Endothelial cell of umbilical vein (primary cell): ENCODE measurements at regions of chr10 and their contacts with region 1.

Region 1: GRCh38 chr10:69800109-69800508 is 1.6 kb upstream of the COL13A1 start:
- DNase-seq: peak; percentile 56
- H3K4me3 ChIP-seq: no peak overlapping the region
- H3K27ac ChIP-seq: no peak overlapping the region
- H3K4me1 ChIP-seq: peaks cover 20% of the 10 kb centered on the region
- H3K27me3 ChIP-seq: peaks cover 13 to 23% of the 10 kb centered on the region in 2 experiments
- CTCF ChIP-seq: peak; percentile 77 to 79
- POLR2A ChIP-seq: no peak

Region 2: GRCh38 chr10:68813559-68813958 is 986.5 kb before region 1 on chr10:
- CTCF ChIA-PET with region 1: no interaction called
- POLR2A ChIA-PET with region 1: no interaction called
- dilution Hi-C with region 1: no loop called
- intact Hi-C with region 1: no loop called
- DNase-seq: no peak
- H3K4me3 ChIP-seq: no peak overlapping the region
- H3K27ac ChIP-seq: no peak overlapping the region
- H3K4me1 ChIP-seq: no peaks in the 10 kb centered on the region
- H3K27me3 ChIP-seq: no peaks in the 10 kb centered on the region
- CTCF ChIP-seq: no peak
- POLR2A ChIP-seq: no peak

Region 3: GRCh38 chr10:69644658-69645295 is 155.3 kb before region 1 on chr10:
- CTCF ChIA-PET with region 1: interaction called, 25 read pairs
- POLR2A ChIA-PET with region 1: no interaction called
- dilution Hi-C with region 1: no loop called
- intact Hi-C with region 1: loop called (anchors 1 kb)
- DNase-seq: peak; percentile 49
- H3K4me3 ChIP-seq: no peak overlapping the region
- H3K27ac ChIP-seq: no peak overlapping the region
- H3K4me1 ChIP-seq: no peaks in the 10 kb centered on the region
- H3K27me3 ChIP-seq: peaks cover 2 to 3% of the 10 kb centered on the region in 2 experiments
- CTCF ChIP-seq: peak; percentile 84 to 86
- POLR2A ChIP-seq: no peak

Region 4: GRCh38 chr10:69728335-69728870 is 71.7 kb before region 1 on chr10:
- CTCF ChIA-PET with region 1: interaction called, 10 read pairs
- POLR2A ChIA-PET with region 1: no interaction called
- dilution Hi-C with region 1: no loop called
- intact Hi-C with region 1: no loop called
- DNase-seq: peak; percentile 87
- H3K4me3 ChIP-seq: no peak overlapping the region
- H3K27ac ChIP-seq: peak overlapping the region; percentile 64
- H3K4me1 ChIP-seq: peaks cover 21% of the 10 kb centered on the region
- H3K27me3 ChIP-seq: peaks cover 0 to 2% of the 10 kb centered on the region in 2 experiments
- CTCF ChIP-seq: no peak
- POLR2A ChIP-seq: no peak

Region 5: DNA sequence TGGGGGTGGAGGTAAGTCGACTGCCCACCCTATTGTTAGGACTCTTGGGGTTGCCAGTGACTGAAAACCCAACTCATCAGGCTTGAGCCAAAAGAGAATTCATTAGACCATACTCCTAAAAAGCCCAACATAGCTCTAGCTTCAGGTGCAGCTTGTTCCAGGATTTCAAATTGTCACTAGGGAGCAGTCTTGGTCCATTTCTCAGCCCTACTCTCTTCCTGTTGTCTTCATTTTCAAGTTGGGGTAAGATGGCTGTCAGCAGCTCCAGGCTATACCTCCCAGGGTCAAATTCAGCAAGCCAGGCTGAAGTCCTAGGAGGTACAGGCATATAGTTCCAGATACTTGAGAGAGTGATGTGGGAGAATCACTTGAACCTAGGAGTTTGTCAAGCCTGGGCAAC is 13.3 kb before region 1 on chr10:
- CTCF ChIA-PET with region 1: interaction called, 79 read pairs
- POLR2A ChIA-PET with region 1: no interaction called
- dilution Hi-C with region 1: no loop called
- intact Hi-C with region 1: no loop called
- DNase-seq: peak; percentile 66
- H3K4me3 ChIP-seq: no peak overlapping the region
- H3K27ac ChIP-seq: no peak overlapping the region
- H3K4me1 ChIP-seq: no peaks in the 10 kb centered on the region
- H3K27me3 ChIP-seq: peaks cover 24 to 25% of the 10 kb centered on the region in 2 experiments
- CTCF ChIP-seq: peak; percentile 49 to 50
- POLR2A ChIP-seq: no peak

Region 6: DNA sequence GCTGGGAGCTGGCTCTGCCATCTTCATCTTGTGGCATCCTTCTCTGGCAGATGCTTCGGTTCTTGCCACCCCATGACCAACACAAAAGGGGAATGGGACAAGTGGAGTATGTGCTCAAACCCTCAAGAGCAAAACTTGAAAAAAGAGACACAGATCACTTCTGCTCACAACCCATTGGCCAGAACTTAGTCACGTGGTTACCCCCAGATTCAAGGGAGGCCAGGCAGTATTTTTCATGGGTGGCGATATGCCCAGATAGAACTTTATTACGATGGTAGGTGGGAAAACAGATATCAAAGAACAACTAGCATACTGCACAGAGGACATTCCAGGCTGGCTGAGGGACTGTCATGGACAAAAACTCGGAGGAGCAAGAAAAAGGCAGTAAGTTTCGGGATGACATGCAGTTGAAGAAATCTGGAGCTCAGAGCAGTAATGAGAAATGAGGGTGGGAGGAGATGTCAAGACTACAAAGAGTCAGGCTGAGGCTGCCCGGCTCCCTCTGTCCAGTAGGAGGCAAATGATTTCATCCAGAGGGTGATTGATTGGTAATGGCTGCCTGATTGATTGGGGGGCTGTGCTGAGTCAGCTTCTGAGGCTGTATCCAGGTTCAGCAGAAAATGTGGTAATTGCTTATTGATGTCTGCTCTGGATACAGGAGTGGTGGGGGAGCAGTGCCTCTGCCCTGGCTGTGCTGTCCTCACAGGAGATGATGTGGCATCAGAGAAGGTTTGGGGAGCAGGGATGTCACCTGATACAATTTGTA is 26.9 kb after region 1 on chr10:
- CTCF ChIA-PET with region 1: interaction called, 5 read pairs
- POLR2A ChIA-PET with region 1: no interaction called
- dilution Hi-C with region 1: no loop called
- intact Hi-C with region 1: loop called (anchors 1 kb)
- DNase-seq: no peak
- H3K4me3 ChIP-seq: no peak overlapping the region
- H3K27ac ChIP-seq: no peak overlapping the region
- H3K4me1 ChIP-seq: peaks cover 37% of the 10 kb centered on the region
- H3K27me3 ChIP-seq: no peaks in the 10 kb centered on the region
- CTCF ChIP-seq: peak; percentile 6 to 13
- POLR2A ChIP-seq: no peak

Region 7: GRCh38 chr10:69845574-69846292 is 45.6 kb after region 1 on chr10:
- CTCF ChIA-PET with region 1: interaction called, 12 read pairs
- POLR2A ChIA-PET with region 1: interaction called, 4 read pairs
- dilution Hi-C with region 1: no loop called
- intact Hi-C with region 1: loop called (anchors 5 kb)
- DNase-seq: peak; percentile 81
- H3K4me3 ChIP-seq: peak overlapping the region in 1 of 3 experiments; percentile 6
- H3K27ac ChIP-seq: peak overlapping the region; percentile 78
- H3K4me1 ChIP-seq: peaks cover 43% of the 10 kb centered on the region
- H3K27me3 ChIP-seq: no peaks in the 10 kb centered on the region
- CTCF ChIP-seq: no peak
- POLR2A ChIP-seq: no peak

Region 8: GRCh38 chr10:69861251-69862240 is 61.4 kb after region 1 on chr10:
- CTCF ChIA-PET with region 1: interaction called, 15 read pairs
- POLR2A ChIA-PET with region 1: no interaction called
- dilution Hi-C with region 1: no loop called
- intact Hi-C with region 1: loop called (anchors 2 kb)
- DNase-seq: peak; percentile 95
- H3K4me3 ChIP-seq: no peak overlapping the region
- H3K27ac ChIP-seq: peak overlapping the region; percentile 10
- H3K4me1 ChIP-seq: peaks cover 62% of the 10 kb centered on the region
- H3K27me3 ChIP-seq: no peaks in the 10 kb centered on the region
- CTCF ChIP-seq: peak; percentile 34 to 51
- POLR2A ChIP-seq: no peak